Breast epithelium (tissue), 4 donors: ENCODE measurements at regions of chr7 and their contacts with region 1.

Region 1: DNA sequence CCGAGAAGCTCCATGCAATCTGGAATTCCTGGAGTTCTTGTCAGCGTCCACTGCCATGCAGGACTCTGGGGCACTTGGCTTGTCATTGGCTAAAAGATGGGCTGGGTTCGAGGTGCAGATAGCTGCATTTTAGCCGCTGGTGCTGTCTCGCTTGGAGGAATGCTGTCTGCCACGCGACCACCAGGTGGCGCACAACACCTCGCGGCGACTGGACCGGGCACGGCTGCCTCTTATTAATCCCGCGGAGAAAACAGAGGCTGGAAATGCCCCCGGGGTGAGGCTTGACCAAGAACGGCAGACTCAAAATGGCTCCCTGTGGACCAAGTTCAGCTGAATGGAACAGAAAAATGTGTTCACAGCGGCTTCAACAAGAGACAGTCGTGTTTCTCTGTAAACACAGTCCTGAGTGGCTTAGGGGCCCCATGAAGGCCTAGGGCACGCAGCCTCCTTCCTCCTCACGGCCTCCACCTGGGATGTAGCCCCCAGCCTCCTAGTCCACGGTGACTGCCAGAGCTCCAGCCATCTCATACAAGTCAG is 46.2 kb downstream of the AOC1 start:
- DNase-seq: peak; percentile 56 to 77
- H3K4me3 ChIP-seq: no peak overlapping the region
- H3K27ac ChIP-seq: no peak overlapping the region
- H3K4me1 ChIP-seq: no peaks in the 10 kb centered on the region
- H3K27me3 ChIP-seq: peaks cover 0 to 11% of the 10 kb centered on the region in 2 donors
- CTCF ChIP-seq: peak; percentile 63 to 91 (median 85)
- POLR2A ChIP-seq: no peak

Region 2: GRCh38 chr7:150962553-150963399 is 64.2 kb after region 1 on chr7:
- intact Hi-C with region 1: loop called (anchors 10 kb)
- DNase-seq: no peak
- H3K4me3 ChIP-seq: no peak overlapping the region
- H3K27ac ChIP-seq: no peak overlapping the region
- H3K4me1 ChIP-seq: no peaks in the 10 kb centered on the region
- H3K27me3 ChIP-seq: peaks cover 0 to 48% of the 10 kb centered on the region in 2 donors
- CTCF ChIP-seq: peak in 2 of 3 donors; percentile 60 to 66
- POLR2A ChIP-seq: no peak